ENCODE measurements at regions of chr20 and their contacts with region 1.

Region 1: DNA sequence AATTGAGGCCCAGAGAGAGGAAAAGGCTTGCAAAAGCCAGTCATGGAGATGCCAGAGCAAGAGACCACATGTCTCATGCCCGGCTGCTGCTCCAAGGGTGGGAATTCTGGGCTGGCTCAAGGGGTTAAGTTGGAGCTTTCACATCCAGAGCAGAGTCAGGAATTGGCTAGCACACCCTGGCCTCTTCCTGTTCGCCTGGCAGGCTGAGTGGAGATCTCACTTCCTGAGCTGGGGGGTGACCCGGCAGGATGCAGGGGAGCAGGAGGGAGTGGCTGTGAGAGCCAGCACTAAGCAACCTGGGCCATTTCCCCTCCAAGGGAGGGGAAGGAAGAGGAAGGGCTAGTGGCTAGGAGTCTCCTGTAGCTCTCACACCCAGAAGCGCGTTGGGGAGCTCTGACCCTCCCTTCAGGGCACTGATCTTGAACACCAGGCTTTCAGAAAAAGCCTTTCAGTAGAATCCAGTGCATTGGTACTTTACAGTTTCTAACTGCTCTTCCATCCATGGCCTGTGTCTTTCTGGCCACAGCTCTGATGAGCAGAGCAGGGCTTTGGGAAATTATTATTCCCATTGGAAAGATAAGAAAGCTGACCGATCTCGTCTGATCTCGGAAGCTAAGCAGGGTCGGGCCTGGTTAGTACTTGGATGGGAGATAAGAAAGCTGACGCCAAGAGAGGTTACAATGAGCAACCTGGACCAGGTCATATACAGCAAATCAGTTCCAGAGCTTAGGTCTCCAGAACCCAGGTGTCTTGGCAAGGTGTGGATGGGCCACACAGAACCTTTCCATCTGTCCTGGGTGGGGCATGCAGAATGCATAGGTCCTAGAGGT is 2.2 kb upstream of the CCM2L start:
- DNase-seq: peak; percentile 80
- H3K4me3 ChIP-seq: peak overlapping the region in 1 of 3 experiments; percentile 4
- H3K27ac ChIP-seq: peak overlapping the region; percentile 62
- H3K4me1 ChIP-seq: peaks cover 39% of the 10 kb centered on the region
- H3K27me3 ChIP-seq: no peaks in the 10 kb centered on the region
- CTCF ChIP-seq: no peak
- POLR2A ChIP-seq: peak; percentile 88

Region 2: GRCh38 chr20:31881945-31882344 is 126.1 kb before region 1 on chr20:
- CTCF ChIA-PET with region 1: no interaction called
- POLR2A ChIA-PET with region 1: no interaction called
- dilution Hi-C with region 1: no loop called
- intact Hi-C with region 1: loop called (anchors 5 kb)
- DNase-seq: no peak
- H3K4me3 ChIP-seq: no peak overlapping the region
- H3K27ac ChIP-seq: no peak overlapping the region
- H3K4me1 ChIP-seq: no peaks in the 10 kb centered on the region
- H3K27me3 ChIP-seq: peaks cover 4 to 6% of the 10 kb centered on the region in 2 experiments
- CTCF ChIP-seq: no peak
- POLR2A ChIP-seq: no peak

Region 3: GRCh38 chr20:31968291-31969126 is 39.5 kb before region 1 on chr20:
- CTCF ChIA-PET with region 1: no interaction called
- POLR2A ChIA-PET with region 1: no interaction called
- dilution Hi-C with region 1: no loop called
- intact Hi-C with region 1: loop called (anchors 1 kb)
- DNase-seq: peak; percentile 69
- H3K4me3 ChIP-seq: no peak overlapping the region
- H3K27ac ChIP-seq: no peak overlapping the region
- H3K4me1 ChIP-seq: no peaks in the 10 kb centered on the region
- H3K27me3 ChIP-seq: peaks cover 24 to 25% of the 10 kb centered on the region in 2 experiments
- CTCF ChIP-seq: no peak
- POLR2A ChIP-seq: no peak

Region 4: DNA sequence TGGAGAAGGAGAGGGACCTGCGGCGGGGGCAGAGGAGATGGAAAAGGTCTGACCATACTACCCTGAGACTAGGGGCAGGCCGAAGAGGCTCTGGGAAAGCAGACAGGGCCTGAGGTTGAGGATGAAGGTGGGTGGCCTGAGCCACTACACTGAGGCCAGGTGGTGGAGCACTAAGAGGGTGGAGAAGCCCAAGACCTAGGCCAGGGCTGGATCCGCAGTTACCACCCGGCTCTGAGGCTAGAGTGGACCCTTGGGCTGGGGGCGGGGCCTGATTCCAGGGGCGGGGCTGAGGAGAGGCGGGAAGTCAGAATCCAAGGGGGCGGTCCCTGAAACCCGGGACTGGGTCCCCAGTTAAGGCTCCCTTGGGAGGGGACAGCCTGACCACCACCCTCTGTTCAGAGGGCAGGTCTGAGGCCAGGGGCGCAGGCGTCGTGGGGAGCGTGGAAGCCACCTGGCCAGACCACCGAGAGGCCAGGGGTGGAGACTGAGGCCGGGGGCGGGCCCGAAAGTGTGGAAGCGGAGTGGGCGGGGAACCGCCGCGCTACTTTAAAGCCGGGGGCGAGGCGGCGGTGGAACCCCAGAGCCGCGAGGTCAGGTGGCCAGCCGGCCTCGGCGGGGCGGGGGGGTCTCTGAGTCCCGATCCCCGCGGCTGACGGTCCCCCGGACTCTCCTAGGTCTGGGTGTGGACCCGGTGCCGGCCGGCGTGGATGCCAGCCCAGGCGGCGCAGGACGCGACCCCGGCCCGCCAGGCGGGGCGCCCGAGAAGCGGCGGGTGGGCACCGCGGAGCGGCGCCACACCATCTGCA is 10.5 kb after region 1 on chr20:
- CTCF ChIA-PET with region 1: interaction called, 11 read pairs
- POLR2A ChIA-PET with region 1: interaction called, 3 read pairs
- dilution Hi-C with region 1: no loop called
- intact Hi-C with region 1: loop called (anchors 1 kb)
- DNase-seq: peak; percentile 66
- H3K4me3 ChIP-seq: peak overlapping the region; percentile 49 to 64 (median 53)
- H3K27ac ChIP-seq: no peak overlapping the region
- H3K4me1 ChIP-seq: peaks cover 6% of the 10 kb centered on the region
- H3K27me3 ChIP-seq: no peaks in the 10 kb centered on the region
- CTCF ChIP-seq: peak in 1 of 2 donors; percentile 2
- POLR2A ChIP-seq: no peak

Measured in endothelial cell of umbilical vein (primary cell).